SK-N-SH (cell line): ENCODE measurements at regions of chr17 and their contacts with region 1.

Region 1: GRCh38 chr17:64506576-64507477 is at the start of gene CEP95:
- DNase-seq: peak; percentile 97
- H3K4me3 ChIP-seq: peak within 1 kb of the TSS; percentile 74 to 96
- H3K27ac ChIP-seq: peak within 1 kb of the TSS; percentile 98 to 100
- H3K4me1 ChIP-seq: peaks cover 22 to 29% of the 10 kb centered on the region in 2 experiments
- H3K27me3 ChIP-seq: no peaks in the 10 kb centered on the region
- CTCF ChIP-seq: no peak
- EP300 ChIP-seq: peak in 1 of 2 experiments; percentile 40; a peak in 1 of 4 replicates
- RAD21 ChIP-seq: no peak
- polyA plus RNA-seq, gene CEP95: 30.8 and 40.1 TPM in 2 replicates

Region 2: GRCh38 chr17:64491034-64491859 is 15.6 kb before region 1 on chr17:
- CTCF ChIA-PET with region 1: interaction called, 60 read pairs
- POLR2A ChIA-PET with region 1: interaction called, 140 read pairs
- DNase-seq: no peak
- H3K4me3 ChIP-seq: no peak overlapping the region
- H3K27ac ChIP-seq: no peak overlapping the region; a peak in 1 of 4 replicates
- H3K4me1 ChIP-seq: peaks cover 4 to 9% of the 10 kb centered on the region in 2 experiments; a peak in 3 of 4 replicates
- H3K27me3 ChIP-seq: no peaks in the 10 kb centered on the region
- CTCF ChIP-seq: peak; percentile 92
- EP300 ChIP-seq: no peak
- RAD21 ChIP-seq: peak; percentile 61

Region 3: DNA sequence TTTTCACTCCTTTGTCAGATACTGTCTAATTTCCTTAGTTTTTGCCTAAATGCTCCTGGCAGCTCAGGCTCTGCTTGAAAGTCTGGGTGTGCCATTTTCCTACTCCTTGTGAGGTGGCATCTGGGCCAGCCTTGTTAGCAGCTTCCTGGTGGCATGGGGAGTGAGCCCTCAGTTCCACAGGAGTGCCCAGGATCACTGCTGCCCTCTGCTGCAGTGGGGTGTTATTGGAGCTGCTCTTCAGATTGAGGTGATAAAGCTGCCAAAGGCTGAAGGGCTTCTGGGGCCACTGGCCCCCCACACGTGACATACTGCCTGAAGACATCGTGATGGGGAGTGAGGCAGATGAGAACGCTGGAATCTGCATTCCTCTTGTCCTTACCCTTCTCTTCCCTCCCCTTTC is 27.3 kb after region 1 on chr17:
- CTCF ChIA-PET with region 1: interaction called, 13 read pairs
- POLR2A ChIA-PET with region 1: interaction called, 7 read pairs
- DNase-seq: no peak
- H3K4me3 ChIP-seq: no peak overlapping the region
- H3K27ac ChIP-seq: peak overlapping the region in 1 of 2 experiments; percentile 6; a peak in 1 of 4 replicates
- H3K4me1 ChIP-seq: no peaks in the 10 kb centered on the region
- H3K27me3 ChIP-seq: no peaks in the 10 kb centered on the region
- CTCF ChIP-seq: peak; percentile 32; the same call in 1 of the 2 replicates
- EP300 ChIP-seq: no peak
- RAD21 ChIP-seq: no peak

Region 4: GRCh38 chr17:64599187-64599676 is 92.4 kb after region 1 on chr17:
- CTCF ChIA-PET with region 1: no interaction called
- POLR2A ChIA-PET with region 1: no interaction called
- DNase-seq: no peak
- H3K4me3 ChIP-seq: no peak overlapping the region
- H3K27ac ChIP-seq: peak overlapping the region in 1 of 2 experiments; percentile 15; a peak in 1 of 4 replicates
- H3K4me1 ChIP-seq: peaks cover 0 to 12% of the 10 kb centered on the region in 2 experiments; a peak in 2 of 4 replicates
- H3K27me3 ChIP-seq: no peaks in the 10 kb centered on the region
- CTCF ChIP-seq: no peak
- EP300 ChIP-seq: no peak
- RAD21 ChIP-seq: no peak

Region 5: DNA sequence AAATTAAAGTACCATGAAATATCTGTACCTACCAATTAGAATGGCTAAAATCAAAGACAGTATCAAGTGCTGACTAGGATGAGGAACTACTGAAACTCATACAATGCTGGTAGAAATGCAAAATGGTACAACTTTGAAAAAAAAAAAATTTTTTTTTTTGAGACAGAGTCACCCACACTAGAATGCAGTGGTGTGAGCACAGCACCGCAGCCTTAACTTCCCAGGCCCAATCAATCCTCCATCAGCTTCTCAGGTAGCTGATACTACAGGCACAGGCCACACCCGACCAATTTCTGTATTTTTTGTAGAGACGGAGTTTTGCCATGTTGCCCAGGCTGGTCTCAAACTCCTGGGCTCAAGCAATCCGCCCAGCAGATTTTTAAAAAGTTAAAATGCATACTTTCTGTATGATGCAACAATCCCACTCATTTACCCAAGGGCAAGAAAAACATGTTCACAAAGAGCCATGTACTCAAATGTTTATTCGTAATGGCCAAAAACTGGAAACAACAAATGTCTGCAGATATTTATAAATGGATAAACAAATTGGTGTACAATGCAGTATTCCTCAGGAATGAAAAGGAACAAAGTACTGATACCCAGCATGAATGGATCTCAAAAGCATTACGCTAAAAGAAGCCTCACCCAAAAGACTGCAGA is 146.6 kb after region 1 on chr17:
- CTCF ChIA-PET with region 1: interaction called, 10 read pairs
- POLR2A ChIA-PET with region 1: no interaction called
- DNase-seq: no peak
- H3K4me3 ChIP-seq: peak overlapping the region in 1 of 2 experiments; percentile 1; a peak in 1 of 4 replicates
- H3K27ac ChIP-seq: peak overlapping the region in 1 of 2 experiments; percentile 33; a peak in 2 of 4 replicates
- H3K4me1 ChIP-seq: peaks cover 2 to 31% of the 10 kb centered on the region in 2 experiments
- H3K27me3 ChIP-seq: no peaks in the 10 kb centered on the region
- CTCF ChIP-seq: no peak
- EP300 ChIP-seq: no peak
- RAD21 ChIP-seq: no peak

Region 6: DNA sequence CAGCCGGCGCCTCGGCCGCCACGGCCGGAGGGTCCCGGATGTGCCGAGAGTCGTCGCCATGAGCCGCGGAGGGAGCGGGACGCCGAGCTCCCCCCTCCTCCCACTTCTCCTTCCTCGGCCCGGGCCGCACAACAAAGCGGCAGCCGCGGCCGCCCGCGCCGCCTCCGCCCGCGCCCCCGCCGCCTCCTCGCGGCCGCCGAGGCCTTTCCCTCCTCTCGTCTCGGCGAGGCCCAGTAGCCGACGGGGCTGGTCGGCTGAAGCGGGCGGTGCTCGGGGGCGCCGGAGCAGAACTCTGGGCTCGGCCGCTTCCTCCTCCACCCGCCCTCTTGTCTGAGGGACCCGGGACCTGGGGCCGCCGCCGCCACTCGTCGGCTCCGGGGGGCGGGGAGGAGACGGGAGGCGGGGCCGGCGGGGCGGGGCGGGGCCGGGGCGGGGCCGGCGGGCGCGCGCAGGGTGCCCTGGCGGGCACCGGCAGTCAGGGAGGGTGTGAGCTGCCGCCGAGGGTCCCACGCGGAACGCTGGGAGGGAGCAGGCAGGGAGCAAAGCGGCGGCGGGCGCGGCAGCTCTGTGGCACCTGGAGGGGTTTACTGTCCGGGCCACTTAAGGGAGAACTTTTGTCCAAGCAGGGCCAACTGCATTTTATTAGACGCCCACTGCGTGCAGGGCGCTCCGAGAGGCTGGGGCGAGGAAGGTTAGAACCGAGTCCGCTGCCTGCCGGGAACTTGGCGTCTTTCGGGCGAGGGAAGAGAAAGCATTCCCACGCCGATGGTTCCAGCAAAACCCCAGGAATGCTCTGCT is 155.3 kb after region 1 on chr17 and contains the start of gene SMURF2:
- CTCF ChIA-PET with region 1: no interaction called
- POLR2A ChIA-PET with region 1: interaction called, 15 read pairs
- DNase-seq: peak; percentile 100
- H3K4me3 ChIP-seq: peak within 1 kb of the TSS; percentile 69 to 96
- H3K27ac ChIP-seq: peak within 1 kb of the TSS; percentile 84 to 92
- H3K4me1 ChIP-seq: peaks cover 6 to 20% of the 10 kb centered on the region in 2 experiments
- H3K27me3 ChIP-seq: no peaks in the 10 kb centered on the region
- CTCF ChIP-seq: peak; percentile 30
- EP300 ChIP-seq: no peak
- RAD21 ChIP-seq: no peak
- polyA plus RNA-seq, gene SMURF2: 36.6 and 52.4 TPM in 2 replicates